Gastrocnemius medialis (tissue), 4 donors: ENCODE measurements at regions of chr12 and their contacts with region 1.

Region 1: DNA sequence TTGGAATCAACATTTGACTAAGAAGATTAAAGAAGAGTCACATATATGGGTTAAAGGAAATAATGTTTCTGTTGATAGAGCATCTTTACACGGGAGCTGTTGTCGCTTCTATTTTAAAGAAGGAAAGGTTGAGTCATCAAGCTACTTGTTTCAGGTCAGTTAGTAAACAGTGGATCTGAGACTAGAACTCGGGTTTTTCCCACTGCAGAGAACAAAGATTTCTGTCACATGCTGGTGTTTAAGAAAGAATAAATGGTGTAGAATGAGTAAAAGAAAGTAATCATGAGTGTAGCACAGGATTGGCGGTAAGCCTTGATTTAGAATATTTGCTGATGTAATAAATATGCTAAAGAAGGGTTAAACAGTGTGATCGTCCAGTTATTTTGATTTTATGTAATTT is 455.5 kb downstream of the AEBP2 start:
- DNase-seq: no peak
- ATAC-seq: no peak
- H3K4me3 ChIP-seq: no peak overlapping the region
- H3K27ac ChIP-seq: no peak overlapping the region
- H3K4me1 ChIP-seq: peaks cover 0 to 3% of the 10 kb centered on the region in 2 donors
- H3K27me3 ChIP-seq: no peaks in the 10 kb centered on the region
- CTCF ChIP-seq: no peak
- POLR2A ChIP-seq: no peak

Region 2: DNA sequence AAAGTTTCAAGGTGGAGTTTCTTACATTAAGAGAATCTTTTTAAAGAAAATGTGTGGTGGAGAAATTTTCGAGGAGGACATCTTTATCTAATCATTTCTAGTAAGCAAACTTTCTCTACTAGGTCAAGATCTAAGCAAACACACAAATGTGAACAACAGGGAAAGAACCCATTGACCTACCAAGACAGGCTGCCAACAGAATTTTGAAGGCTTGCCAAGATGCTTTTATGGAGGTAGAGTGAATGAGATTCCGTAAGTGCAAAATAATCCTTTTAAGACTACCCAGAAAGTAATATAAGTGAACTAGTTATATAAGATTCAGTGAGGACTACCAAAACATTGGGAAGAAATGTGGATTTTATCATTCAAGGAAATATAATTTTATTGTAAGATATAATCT is 116.4 kb after region 1 on chr12:
- in situ Hi-C with region 1: no loop called
- intact Hi-C with region 1: no loop called
- DNase-seq: no peak
- ATAC-seq: no peak
- H3K4me3 ChIP-seq: no peak overlapping the region
- H3K27ac ChIP-seq: no peak overlapping the region
- H3K4me1 ChIP-seq: no peaks in the 10 kb centered on the region
- H3K27me3 ChIP-seq: no peaks in the 10 kb centered on the region
- CTCF ChIP-seq: no peak
- POLR2A ChIP-seq: no peak

Region 3: GRCh38 chr12:20097626-20098025 is 202.8 kb after region 1 on chr12:
- in situ Hi-C with region 1: no loop called
- intact Hi-C with region 1: loop called (anchors 5 kb)
- DNase-seq: no peak
- ATAC-seq: peak in 1 of 2 donors; percentile 50
- H3K4me3 ChIP-seq: no peak overlapping the region
- H3K27ac ChIP-seq: peak overlapping the region in 2 of 4 donors; percentile 6 to 30
- H3K4me1 ChIP-seq: no peaks in the 10 kb centered on the region
- H3K27me3 ChIP-seq: no peaks in the 10 kb centered on the region
- CTCF ChIP-seq: no peak
- POLR2A ChIP-seq: no peak